Aorta (tissue), 5 donors: ENCODE measurements at regions of chr18 and their contacts with region 1.

Region 1: DNA sequence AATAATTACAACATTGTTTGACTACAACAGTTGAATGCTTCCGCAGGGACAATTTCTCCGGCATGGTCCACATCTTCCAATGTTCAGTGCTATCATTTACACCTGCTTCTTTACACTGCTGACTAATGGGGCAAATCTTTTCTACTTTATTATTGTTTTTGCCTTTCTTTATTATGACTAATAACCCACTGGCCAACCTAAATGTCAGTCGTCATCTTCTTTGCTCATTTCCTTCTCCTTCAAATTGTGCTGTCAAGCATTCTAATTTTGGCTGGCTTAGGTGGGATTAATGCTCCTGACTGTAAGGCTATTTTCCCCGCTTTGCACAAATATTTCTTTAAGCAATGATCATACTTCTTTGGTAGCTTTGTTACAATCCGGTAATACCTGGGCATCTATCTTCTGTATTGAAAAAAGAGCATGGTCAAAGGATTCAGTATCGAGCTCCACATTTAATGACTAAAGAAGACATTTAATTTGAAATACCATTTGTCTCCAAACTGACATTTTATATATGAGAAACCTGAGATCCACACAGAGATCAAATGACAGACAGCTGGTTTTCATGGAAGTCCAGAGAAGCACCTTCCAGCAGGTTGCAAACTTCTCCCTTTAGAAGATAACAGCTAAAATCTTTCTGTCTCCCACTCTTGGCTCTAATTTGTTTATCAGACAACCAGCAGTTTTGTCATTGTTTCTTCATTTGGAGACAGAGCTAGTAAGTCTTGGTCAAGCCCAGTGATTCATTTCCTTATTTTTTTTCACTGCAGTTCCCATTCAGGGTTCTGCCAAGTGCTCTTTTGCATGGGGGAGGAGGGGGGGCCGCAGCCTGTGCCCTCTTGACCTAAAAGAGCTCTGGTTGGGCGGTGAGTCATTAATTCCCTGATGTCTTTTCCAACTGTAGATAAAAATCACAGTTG is 132.9 kb downstream of the SOCS6 start:
- DNase-seq: peak; percentile 90 to 91
- ATAC-seq: peak; percentile 87
- H3K4me3 ChIP-seq: no peak overlapping the region
- H3K27ac ChIP-seq: no peak overlapping the region
- H3K4me1 ChIP-seq: no peaks in the 10 kb centered on the region
- H3K27me3 ChIP-seq: no peaks in the 10 kb centered on the region

Region 2: GRCh38 chr18:70337139-70337972 is 84.4 kb before region 1 on chr18:
- intact Hi-C with region 1: loop called (anchors 5 to 10 kb)
- DNase-seq: peak in 1 of 2 donors; percentile 51
- ATAC-seq: peak; percentile 61
- H3K4me3 ChIP-seq: no peak overlapping the region
- H3K27ac ChIP-seq: no peak overlapping the region
- H3K4me1 ChIP-seq: no peaks in the 10 kb centered on the region
- H3K27me3 ChIP-seq: no peaks in the 10 kb centered on the region